Activated CD4-positive, alpha-beta memory T cell treated with anti-CD3 and anti-CD28 coated beads for 36 hours (primary cell): ENCODE measurements at regions of chr18 and their contacts with region 1.

Region 1: GRCh38 chr18:54119524-54120019 is 104.9 kb downstream of the MBD2 start:
- DNase-seq: no peak
- H3K4me3 Mint-ChIP-seq: peak overlapping the region; percentile 51
- H3K27ac Mint-ChIP-seq: no peak overlapping the region
- H3K4me1 Mint-ChIP-seq: peaks cover 3% of the 10 kb centered on the region
- H3K27me3 Mint-ChIP-seq: no peaks in the 10 kb centered on the region

Region 2: GRCh38 chr18:53567929-53568574 is 551.5 kb before region 1 on chr18:
- CTCF ChIA-PET with region 1: interaction called, 18 read pairs
- POLR2A ChIA-PET with region 1: no interaction called
- intact Hi-C with region 1: loop called (anchors 1 kb)
- DNase-seq: no peak
- H3K4me3 Mint-ChIP-seq: no peak overlapping the region
- H3K27ac Mint-ChIP-seq: no peak overlapping the region
- H3K4me1 Mint-ChIP-seq: no peaks in the 10 kb centered on the region
- H3K27me3 Mint-ChIP-seq: no peaks in the 10 kb centered on the region

Region 3: DNA sequence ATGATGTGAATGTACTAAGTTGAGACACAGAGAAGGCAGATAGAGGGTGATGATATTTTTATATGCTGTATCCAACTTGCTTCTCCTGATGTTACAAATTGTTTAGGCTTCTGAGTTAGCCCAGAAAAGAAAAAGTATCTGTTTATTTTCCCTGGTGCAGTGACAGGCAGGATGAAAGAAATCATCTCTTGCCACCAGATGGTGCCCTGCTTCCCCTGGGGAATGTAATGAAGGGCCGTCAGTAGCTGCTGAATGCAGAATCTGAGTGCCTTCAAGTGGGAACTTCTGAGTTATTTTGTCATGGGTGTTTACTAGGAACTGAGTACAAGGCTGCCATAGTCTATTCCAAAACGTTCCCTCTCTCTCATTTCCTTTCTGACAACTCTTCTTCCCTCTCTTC is 420.7 kb before region 1 on chr18:
- CTCF ChIA-PET with region 1: interaction called, 3 read pairs
- POLR2A ChIA-PET with region 1: no interaction called
- intact Hi-C with region 1: loop called (anchors 1 kb)
- DNase-seq: no peak
- H3K4me3 Mint-ChIP-seq: no peak overlapping the region
- H3K27ac Mint-ChIP-seq: no peak overlapping the region
- H3K4me1 Mint-ChIP-seq: no peaks in the 10 kb centered on the region
- H3K27me3 Mint-ChIP-seq: no peaks in the 10 kb centered on the region

Region 4: GRCh38 chr18:53909668-53910067 is 209.9 kb before region 1 on chr18:
- CTCF ChIA-PET with region 1: interaction called, 38 read pairs
- POLR2A ChIA-PET with region 1: no interaction called
- intact Hi-C with region 1: loop called (anchors 1 kb)
- DNase-seq: peak; percentile 11
- H3K4me3 Mint-ChIP-seq: no peak overlapping the region
- H3K27ac Mint-ChIP-seq: no peak overlapping the region
- H3K4me1 Mint-ChIP-seq: no peaks in the 10 kb centered on the region
- H3K27me3 Mint-ChIP-seq: peaks cover 11% of the 10 kb centered on the region

Region 5: GRCh38 chr18:54269893-54270844 is 150.6 kb after region 1 on chr18:
- CTCF ChIA-PET with region 1: interaction called, 13 read pairs
- POLR2A ChIA-PET with region 1: no interaction called
- intact Hi-C with region 1: no loop called
- DNase-seq: peak; percentile 78
- H3K4me3 Mint-ChIP-seq: peak overlapping the region; percentile 78
- H3K27ac Mint-ChIP-seq: peak overlapping the region; percentile 94
- H3K4me1 Mint-ChIP-seq: peaks cover 29% of the 10 kb centered on the region
- H3K27me3 Mint-ChIP-seq: no peaks in the 10 kb centered on the region